Caco-2 (cell line): ENCODE measurements at regions of chr1 and their contacts with region 1.

Region 1: DNA sequence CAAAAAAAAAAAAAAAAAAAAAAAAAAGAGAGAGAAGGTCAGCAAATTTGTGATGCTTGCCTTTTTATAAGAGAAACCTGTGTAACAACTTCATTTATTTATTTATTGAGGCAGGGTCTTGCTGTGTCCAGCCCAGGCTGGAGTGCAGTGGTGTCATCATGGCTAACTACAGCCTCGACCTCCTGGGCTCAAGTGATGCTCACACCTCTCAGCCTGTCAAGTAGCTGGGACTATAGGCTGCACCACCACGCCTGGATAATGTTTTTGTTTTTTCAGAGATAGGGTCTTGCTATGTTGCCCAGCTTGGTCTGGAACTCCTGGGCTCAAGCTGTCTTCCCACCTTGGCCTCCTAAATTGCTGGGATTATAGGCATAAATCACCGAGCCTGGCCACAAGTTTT is 42.4 kb downstream of the DHCR24 start:
- DNase-seq: no peak
- H3K4me3 ChIP-seq: no peak overlapping the region
- H3K4me3 Mint-ChIP-seq: no peak overlapping the region
- H3K27ac Mint-ChIP-seq: no peak overlapping the region
- H3K4me1 ChIP-seq: no peaks in the 10 kb centered on the region
- H3K4me1 Mint-ChIP-seq: no peaks in the 10 kb centered on the region
- H3K27me3 ChIP-seq: no peaks in the 10 kb centered on the region
- H3K27me3 Mint-ChIP-seq: no peaks in the 10 kb centered on the region
- CTCF ChIP-seq: no peak

Region 2: DNA sequence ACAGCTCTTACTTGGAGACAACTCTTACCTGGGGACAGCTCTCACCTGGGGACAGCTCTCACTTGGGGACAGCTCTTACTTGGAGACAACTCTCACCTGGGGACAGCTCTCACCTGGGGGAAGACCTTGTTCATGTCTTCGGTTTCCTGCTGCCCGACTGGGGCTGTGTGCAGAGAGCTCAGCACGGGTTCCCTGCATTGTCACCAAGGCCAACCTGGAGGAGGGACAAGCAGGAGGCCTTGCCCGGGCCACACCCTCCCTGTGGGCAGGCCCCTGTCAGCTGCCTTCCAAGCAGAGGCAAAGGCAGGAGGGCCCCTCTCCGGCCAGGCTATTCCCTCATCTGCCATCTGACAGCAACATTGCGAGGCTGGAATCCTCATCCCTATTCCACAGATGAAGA is 826.6 kb before region 1 on chr1 and contains the start of gene LDLRAD1:
- CTCF ChIA-PET with region 1: interaction called, 14 read pairs
- POLR2A ChIA-PET with region 1: no interaction called
- intact Hi-C with region 1: no loop called
- DNase-seq: no peak
- H3K4me3 ChIP-seq: no peak within 1 kb of the TSS
- H3K4me3 Mint-ChIP-seq: no peak within 1 kb of the TSS
- H3K27ac Mint-ChIP-seq: no peak within 1 kb of the TSS
- H3K4me1 ChIP-seq: peaks cover 10% of the 10 kb centered on the region
- H3K4me1 Mint-ChIP-seq: peaks cover 20% of the 10 kb centered on the region
- H3K27me3 ChIP-seq: no peaks in the 10 kb centered on the region
- H3K27me3 Mint-ChIP-seq: no peaks in the 10 kb centered on the region
- CTCF ChIP-seq: no peak
- total RNA-seq, gene LDLRAD1: not detected in 2 replicates